B cell (primary cell): ENCODE measurements at regions of chr9 and their contacts with region 1.

Region 1: GRCh38 chr9:137423004-137423874 is at the starts of genes EXD3 and NOXA1:
- DNase-seq: peak; percentile 96
- ATAC-seq: peak; percentile 94
- H3K4me3 ChIP-seq: peak within 1 kb of the TSS; percentile 36 to 70 (median 65)
- H3K4me3 Mint-ChIP-seq: peak within 1 kb of the TSS; percentile 86
- H3K27ac ChIP-seq: peak within 1 kb of the TSS in 1 of 2 donors; percentile 58
- H3K27ac Mint-ChIP-seq: peak within 1 kb of the TSS; percentile 59
- H3K4me1 ChIP-seq: peaks cover 12 to 19% of the 10 kb centered on the region in 2 donors
- H3K4me1 Mint-ChIP-seq: peaks cover 11% of the 10 kb centered on the region
- H3K27me3 ChIP-seq: no peaks in the 10 kb centered on the region
- H3K27me3 Mint-ChIP-seq: no peaks in the 10 kb centered on the region
- CTCF ChIP-seq: peak; percentile 69
- total RNA-seq, gene EXD3: 23.7 and 25.1 TPM in 2 replicates
- total RNA-seq, gene NOXA1: 5.7 and 8.4 TPM in 2 replicates

Region 2: GRCh38 chr9:137302176-137302994 is 120.9 kb before region 1 on chr9 and contains the start of gene NRARP:
- CTCF ChIA-PET with region 1: interaction called, 19 read pairs
- POLR2A ChIA-PET with region 1: interaction called, 5 read pairs
- intact Hi-C with region 1: loop called (anchors 1 kb)
- DNase-seq: peak; percentile 95
- ATAC-seq: peak; percentile 86
- H3K4me3 ChIP-seq: peak within 1 kb of the TSS; percentile 38 to 63 (median 56)
- H3K4me3 Mint-ChIP-seq: peak within 1 kb of the TSS; percentile 83
- H3K27ac ChIP-seq: peak within 1 kb of the TSS in 1 of 2 donors; percentile 67
- H3K27ac Mint-ChIP-seq: peak within 1 kb of the TSS; percentile 20
- H3K4me1 ChIP-seq: peaks cover 46 to 49% of the 10 kb centered on the region in 2 donors
- H3K4me1 Mint-ChIP-seq: peaks cover 21% of the 10 kb centered on the region
- H3K27me3 ChIP-seq: peaks cover 0 to 69% (median 34%) of the 10 kb centered on the region in 4 experiments
- H3K27me3 Mint-ChIP-seq: peaks cover 8% of the 10 kb centered on the region
- CTCF ChIP-seq: peak; percentile 79
- total RNA-seq, gene NRARP: 11.4 and 11.5 TPM in 2 replicates

Region 3: GRCh38 chr9:137445275-137445807 is 22.1 kb after region 1 on chr9:
- CTCF ChIA-PET with region 1: interaction called, 23 read pairs
- POLR2A ChIA-PET with region 1: interaction called, 6 read pairs
- intact Hi-C with region 1: loop called (anchors 1 kb)
- DNase-seq: peak; percentile 88
- ATAC-seq: peak; percentile 89
- H3K4me3 ChIP-seq: no peak overlapping the region
- H3K4me3 Mint-ChIP-seq: no peak overlapping the region
- H3K27ac ChIP-seq: no peak overlapping the region
- H3K27ac Mint-ChIP-seq: no peak overlapping the region
- H3K4me1 ChIP-seq: peaks cover 7 to 23% of the 10 kb centered on the region in 2 donors
- H3K4me1 Mint-ChIP-seq: peaks cover 8% of the 10 kb centered on the region
- H3K27me3 ChIP-seq: peaks cover 0 to 20% (median 7%) of the 10 kb centered on the region in 4 experiments
- H3K27me3 Mint-ChIP-seq: peaks cover 11% of the 10 kb centered on the region
- CTCF ChIP-seq: peak; percentile 83

Region 4: GRCh38 chr9:137459147-137459600 is 35.9 kb after region 1 on chr9 and contains the start of gene NSMF:
- CTCF ChIA-PET with region 1: interaction called, 4 read pairs
- POLR2A ChIA-PET with region 1: interaction called, 13 read pairs
- intact Hi-C with region 1: loop called (anchors 1 kb)
- DNase-seq: peak; percentile 96
- ATAC-seq: peak; percentile 82
- H3K4me3 ChIP-seq: peak within 1 kb of the TSS in 4 of 5 experiments; percentile 45 to 69 (median 62)
- H3K4me3 Mint-ChIP-seq: peak within 1 kb of the TSS; percentile 75
- H3K27ac ChIP-seq: peak within 1 kb of the TSS; percentile 50 to 63
- H3K27ac Mint-ChIP-seq: peak within 1 kb of the TSS; percentile 75
- H3K4me1 ChIP-seq: peaks cover 49 to 60% of the 10 kb centered on the region in 2 donors
- H3K4me1 Mint-ChIP-seq: peaks cover 34% of the 10 kb centered on the region
- H3K27me3 ChIP-seq: no peaks in the 10 kb centered on the region
- H3K27me3 Mint-ChIP-seq: no peaks in the 10 kb centered on the region
- CTCF ChIP-seq: no peak
- total RNA-seq, gene NSMF: 28.7 and 35.7 TPM in 2 replicates

Region 5: GRCh38 chr9:137551651-137552384 is 128.6 kb after region 1 on chr9 and contains the start of gene MRPL41:
- CTCF ChIA-PET with region 1: no interaction called
- POLR2A ChIA-PET with region 1: interaction called, 5 read pairs
- intact Hi-C with region 1: loop called (anchors 1 kb)
- DNase-seq: peak; percentile 92
- ATAC-seq: peak; percentile 81
- H3K4me3 ChIP-seq: peak within 1 kb of the TSS; percentile 4 to 81 (median 65)
- H3K4me3 Mint-ChIP-seq: peak within 1 kb of the TSS; percentile 77
- H3K27ac ChIP-seq: peak within 1 kb of the TSS; percentile 55 to 73
- H3K27ac Mint-ChIP-seq: peak within 1 kb of the TSS; percentile 83
- H3K4me1 ChIP-seq: peaks cover 25 to 37% of the 10 kb centered on the region in 2 donors
- H3K4me1 Mint-ChIP-seq: peaks cover 26% of the 10 kb centered on the region
- H3K27me3 ChIP-seq: no peaks in the 10 kb centered on the region
- H3K27me3 Mint-ChIP-seq: no peaks in the 10 kb centered on the region
- CTCF ChIP-seq: no peak
- total RNA-seq, gene MRPL41: 70.9 and 74.9 TPM in 2 replicates